HEK293T (cell line): ENCODE measurements at regions of chr1 and their contacts with region 1.

Region 1: GRCh38 chr1:20786253-20787028 is 666 bp downstream of the HP1BP3 start:
- DNase-seq: peak; percentile 95

Region 2: GRCh38 chr1:20625176-20626097 is 161.0 kb before region 1 on chr1:
- CTCF ChIA-PET with region 1: no interaction called
- POLR2A ChIA-PET with region 1: no interaction called
- DNase-seq: no peak

Region 3: GRCh38 chr1:20661207-20662109 is 125.0 kb before region 1 on chr1 and contains the start of gene DDOST:
- CTCF ChIA-PET with region 1: no interaction called
- POLR2A ChIA-PET with region 1: interaction called, 13 read pairs
- DNase-seq: peak; percentile 96

Region 4: GRCh38 chr1:20696397-20697329 is 89.8 kb before region 1 on chr1:
- CTCF ChIA-PET with region 1: interaction called, 4 read pairs
- POLR2A ChIA-PET with region 1: interaction called, 11 read pairs
- DNase-seq: peak; percentile 87

Region 5: GRCh38 chr1:20767271-20767670 is 19.2 kb before region 1 on chr1:
- CTCF ChIA-PET with region 1: no interaction called
- POLR2A ChIA-PET with region 1: interaction called, 12 read pairs
- DNase-seq: no peak

Region 6: GRCh38 chr1:20775700-20776099 is 10.7 kb before region 1 on chr1:
- CTCF ChIA-PET with region 1: no interaction called
- POLR2A ChIA-PET with region 1: interaction called, 15 read pairs
- DNase-seq: no peak